Heart left ventricle (tissue), 16 donors: ENCODE measurements at regions of chr1 and their contacts with region 1.

Region 1: GRCh38 chr1:219529116-219529515 is 83.8 kb downstream of the ZC3H11B start:
- DNase-seq: no peak
- ATAC-seq: no peak
- H3K4me3 ChIP-seq: no peak overlapping the region
- H3K27ac ChIP-seq: no peak overlapping the region
- H3K4me1 ChIP-seq: no peaks in the 10 kb centered on the region
- H3K27me3 ChIP-seq: no peaks in the 10 kb centered on the region
- CTCF ChIP-seq: no peak
- POLR2A ChIP-seq: no peak

Region 2: DNA sequence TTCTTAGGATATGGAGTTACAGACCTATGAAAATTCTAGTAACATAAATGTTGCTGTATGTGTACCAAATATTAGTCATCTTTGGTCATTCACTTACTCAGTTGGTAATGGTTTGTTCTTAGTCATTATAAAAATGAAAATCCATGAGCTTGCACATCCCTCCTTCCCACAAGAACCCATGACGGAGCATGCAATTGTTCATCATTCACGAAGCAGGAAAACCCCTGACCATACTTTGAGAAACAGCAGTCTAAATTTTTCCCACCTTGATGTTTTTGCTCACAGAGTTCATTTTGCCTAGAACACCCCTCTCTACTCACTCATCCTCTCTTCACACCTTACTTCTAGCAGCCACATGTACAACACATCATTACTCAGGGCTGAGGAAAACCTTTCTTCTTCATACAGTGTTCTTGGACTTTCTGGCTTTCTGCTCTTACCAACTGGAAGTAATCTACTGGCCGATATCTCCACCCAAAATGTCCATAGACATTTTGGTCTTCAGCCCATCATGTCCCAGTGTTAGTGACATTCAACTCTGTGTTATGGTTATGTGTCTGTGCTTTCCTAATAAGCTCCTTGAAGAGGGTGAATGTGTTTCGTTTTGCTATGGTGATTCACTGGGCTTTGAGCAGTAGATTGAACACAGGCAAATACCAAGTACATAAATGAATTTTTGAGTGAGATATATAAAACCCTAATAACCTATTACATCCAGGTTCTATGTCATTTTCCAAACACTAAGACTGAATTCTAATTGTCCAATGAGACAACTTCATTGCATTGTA is 106.1 kb before region 1 on chr1:
- intact Hi-C with region 1: no loop called
- DNase-seq: no peak
- ATAC-seq: no peak
- H3K4me3 ChIP-seq: no peak overlapping the region
- H3K27ac ChIP-seq: no peak overlapping the region
- H3K4me1 ChIP-seq: no peaks in the 10 kb centered on the region
- H3K27me3 ChIP-seq: no peaks in the 10 kb centered on the region
- CTCF ChIP-seq: no peak
- POLR2A ChIP-seq: no peak

Region 3: GRCh38 chr1:219476116-219476515 is 53.0 kb before region 1 on chr1:
- intact Hi-C with region 1: loop called in 1 of 10 experiments (anchors 2 kb)
- DNase-seq: no peak
- ATAC-seq: no peak
- H3K4me3 ChIP-seq: no peak overlapping the region
- H3K27ac ChIP-seq: no peak overlapping the region
- H3K4me1 ChIP-seq: no peaks in the 10 kb centered on the region
- H3K27me3 ChIP-seq: no peaks in the 10 kb centered on the region
- CTCF ChIP-seq: no peak
- POLR2A ChIP-seq: no peak

Region 4: GRCh38 chr1:219629296-219629880 is 100.3 kb after region 1 on chr1:
- intact Hi-C with region 1: no loop called
- DNase-seq: no peak
- ATAC-seq: no peak
- H3K4me3 ChIP-seq: no peak overlapping the region
- H3K27ac ChIP-seq: no peak overlapping the region
- H3K4me1 ChIP-seq: peaks cover 0 to 13% (median 0%) of the 10 kb centered on the region in 12 donors
- H3K27me3 ChIP-seq: no peaks in the 10 kb centered on the region
- CTCF ChIP-seq: no peak
- POLR2A ChIP-seq: no peak

Region 5: GRCh38 chr1:219741011-219741970 is 212.2 kb after region 1 on chr1:
- intact Hi-C with region 1: no loop called
- DNase-seq: no peak
- ATAC-seq: peak; percentile 79 to 86 (median 82)
- H3K4me3 ChIP-seq: peak overlapping the region in 11 of 12 donors; percentile 16 to 61 (median 32)
- H3K27ac ChIP-seq: peak overlapping the region; percentile 11 to 81 (median 55)
- H3K4me1 ChIP-seq: peaks cover 0 to 22% (median 3%) of the 10 kb centered on the region in 12 donors
- H3K27me3 ChIP-seq: no peaks in the 10 kb centered on the region
- CTCF ChIP-seq: no peak
- POLR2A ChIP-seq: no peak